Activated CD4-positive, alpha-beta T cell treated with anti-CD3 and anti-CD28 coated beads, Interleukin-2, amount 10 ng/mL, durations not matched to agents 24 days and 14 days (primary cell): ENCODE measurements at regions of chr10 and their contacts with region 1.

Region 1: GRCh38 chr10:6580279-6581029 is 378 bp upstream of the PRKCQ start:
- DNase-seq: peak; percentile 96
- H3K4me3 Mint-ChIP-seq: peak overlapping the region; percentile 97
- H3K27ac Mint-ChIP-seq: peak overlapping the region; percentile 88
- H3K4me1 Mint-ChIP-seq: peaks cover 60% of the 10 kb centered on the region
- H3K27me3 Mint-ChIP-seq: no peaks in the 10 kb centered on the region

Region 2: GRCh38 chr10:6275022-6275997 is 305.1 kb before region 1 on chr10:
- intact Hi-C with region 1: no loop called
- DNase-seq: peak; percentile 95
- H3K4me3 Mint-ChIP-seq: peak overlapping the region; percentile 79
- H3K27ac Mint-ChIP-seq: peak overlapping the region; percentile 95
- H3K4me1 Mint-ChIP-seq: peaks cover 65% of the 10 kb centered on the region
- H3K27me3 Mint-ChIP-seq: no peaks in the 10 kb centered on the region

Region 3: GRCh38 chr10:6445501-6446316 is 134.7 kb before region 1 on chr10:
- intact Hi-C with region 1: loop called (anchors 2 kb)
- DNase-seq: peak; percentile 86
- H3K4me3 Mint-ChIP-seq: no peak overlapping the region
- H3K27ac Mint-ChIP-seq: peak overlapping the region; percentile 46
- H3K4me1 Mint-ChIP-seq: peaks cover 33% of the 10 kb centered on the region
- H3K27me3 Mint-ChIP-seq: no peaks in the 10 kb centered on the region

Region 4: GRCh38 chr10:6498771-6499170 is 81.7 kb before region 1 on chr10:
- intact Hi-C with region 1: loop called (anchors 2 kb)
- DNase-seq: peak; percentile 89
- H3K4me3 Mint-ChIP-seq: peak overlapping the region; percentile 78
- H3K27ac Mint-ChIP-seq: peak overlapping the region; percentile 84
- H3K4me1 Mint-ChIP-seq: peaks cover 42% of the 10 kb centered on the region
- H3K27me3 Mint-ChIP-seq: no peaks in the 10 kb centered on the region

Region 5: DNA sequence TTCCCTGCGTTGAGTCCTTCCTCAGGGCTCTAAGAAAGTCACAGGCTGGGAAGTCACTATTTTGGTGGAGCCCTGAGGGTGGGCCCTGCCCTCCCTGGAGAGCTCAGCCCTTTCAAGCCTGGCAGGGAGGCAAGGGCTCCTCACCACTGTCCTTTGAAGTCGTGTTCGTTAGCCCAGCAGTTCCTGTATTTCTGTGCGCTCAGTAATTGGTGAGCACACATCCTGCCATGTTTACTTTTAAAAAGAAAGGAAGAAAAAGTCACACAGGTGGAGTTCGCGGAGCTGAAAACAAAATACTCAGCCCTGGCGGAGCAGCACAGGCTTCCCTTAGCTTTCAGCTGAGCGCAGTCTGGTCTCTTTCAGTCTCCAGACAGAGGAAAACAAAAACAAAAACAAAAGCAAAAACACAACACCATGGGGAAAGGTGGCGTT is 37.4 kb before region 1 on chr10:
- intact Hi-C with region 1: loop called (anchors 1 kb)
- DNase-seq: peak; percentile 90
- H3K4me3 Mint-ChIP-seq: peak overlapping the region; percentile 87
- H3K27ac Mint-ChIP-seq: peak overlapping the region; percentile 99
- H3K4me1 Mint-ChIP-seq: peaks cover 66% of the 10 kb centered on the region
- H3K27me3 Mint-ChIP-seq: no peaks in the 10 kb centered on the region

Region 6: GRCh38 chr10:6593241-6593671 is 12.8 kb after region 1 on chr10:
- intact Hi-C with region 1: loop called (anchors 1 kb)
- DNase-seq: peak; percentile 77
- H3K4me3 Mint-ChIP-seq: peak overlapping the region; percentile 51
- H3K27ac Mint-ChIP-seq: peak overlapping the region; percentile 93
- H3K4me1 Mint-ChIP-seq: peaks cover 82% of the 10 kb centered on the region
- H3K27me3 Mint-ChIP-seq: no peaks in the 10 kb centered on the region

Region 7: DNA sequence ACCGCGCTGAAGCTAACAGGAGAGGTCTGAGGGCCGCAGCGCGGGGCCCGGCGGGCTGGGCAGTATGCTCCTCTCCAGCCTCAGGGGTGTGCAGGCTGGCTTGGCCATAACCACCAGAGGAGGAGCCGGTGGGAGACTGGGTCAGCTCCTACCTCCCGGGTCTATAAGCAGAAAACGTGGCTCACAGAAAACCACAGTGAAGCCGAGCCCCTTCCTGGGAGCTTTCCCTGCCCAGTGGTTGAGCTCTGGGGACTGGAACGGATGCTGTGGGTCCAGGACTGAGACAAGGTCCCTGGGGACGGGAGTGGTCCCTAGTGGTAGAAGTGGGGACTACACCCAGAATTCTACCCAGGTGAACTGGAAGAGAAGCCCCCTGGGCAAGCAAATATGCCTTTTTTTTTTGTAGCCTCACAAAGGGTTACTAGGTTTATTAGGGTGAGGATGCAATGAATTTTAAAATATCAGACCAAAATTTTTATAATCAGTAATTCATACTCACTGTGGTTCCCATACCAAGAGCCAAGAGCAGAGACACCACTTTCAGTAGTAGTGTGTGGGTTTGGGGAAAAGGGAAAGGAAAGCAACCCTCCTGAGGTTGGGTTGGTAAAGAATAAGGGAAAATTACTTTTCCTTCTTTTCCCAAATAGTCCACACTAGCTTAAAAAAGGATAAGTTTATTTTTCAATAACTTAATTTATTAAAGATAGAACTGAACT is 67.5 kb after region 1 on chr10:
- intact Hi-C with region 1: loop called (anchors 1 kb)
- DNase-seq: peak; percentile 91
- H3K4me3 Mint-ChIP-seq: no peak overlapping the region
- H3K27ac Mint-ChIP-seq: no peak overlapping the region
- H3K4me1 Mint-ChIP-seq: peaks cover 44% of the 10 kb centered on the region
- H3K27me3 Mint-ChIP-seq: no peaks in the 10 kb centered on the region